Naive thymus-derived CD4-positive, alpha-beta T cell (primary cell): ENCODE measurements at regions of chr7 and their contacts with region 1.

Region 1: DNA sequence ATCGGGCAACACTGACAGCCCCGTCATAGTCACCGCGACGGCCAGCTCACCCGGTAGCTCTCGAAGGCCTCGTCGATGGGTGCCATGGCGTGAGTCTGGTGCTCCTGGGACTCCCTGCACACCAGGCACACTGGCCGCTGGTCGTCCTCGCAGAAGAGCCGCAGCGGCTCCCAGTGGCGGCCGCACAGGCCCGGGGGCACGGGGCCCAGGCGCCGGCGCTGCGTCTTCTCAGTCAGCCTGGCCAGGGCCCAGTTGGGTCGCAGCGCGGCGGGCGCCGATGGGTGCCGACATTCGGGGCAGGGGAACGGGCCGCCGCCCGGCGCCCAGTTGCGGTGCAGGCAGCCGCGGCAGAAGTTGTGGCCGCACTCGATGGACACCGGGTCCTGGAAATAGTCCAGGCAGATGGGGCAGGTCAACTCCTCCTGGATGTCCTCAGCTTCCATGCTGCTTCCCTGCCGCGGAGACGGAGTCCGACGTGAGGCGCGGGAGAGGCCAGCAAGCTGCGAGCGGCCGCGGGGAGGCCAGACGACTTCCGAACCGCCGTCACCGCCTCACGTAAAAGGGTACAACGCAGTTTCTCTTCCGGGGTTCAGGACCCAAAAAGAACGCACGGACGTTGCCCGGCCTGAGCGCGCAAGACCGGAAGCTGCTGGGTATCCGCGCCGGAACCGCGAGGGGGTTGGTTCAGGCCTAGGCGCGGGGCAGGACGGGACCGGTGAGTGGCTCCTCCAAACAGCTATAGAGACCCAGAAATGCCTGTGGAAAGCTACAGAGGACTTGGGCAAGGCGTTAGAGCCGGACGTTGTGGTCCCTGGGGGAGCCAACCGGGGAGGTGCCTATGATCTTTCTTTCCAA is at the start of gene TRIM4:
- DNase-seq: peak; percentile 76 to 92 (median 89)
- ATAC-seq: peak; percentile 98
- H3K4me3 ChIP-seq: peak within 1 kb of the TSS; percentile 68
- H3K4me3 Mint-ChIP-seq: peak within 1 kb of the TSS; percentile 87 to 98 (median 96)
- H3K27ac ChIP-seq: peak within 1 kb of the TSS; percentile 96
- H3K27ac Mint-ChIP-seq: peak within 1 kb of the TSS; percentile 96 to 99 (median 98)
- H3K4me1 ChIP-seq: peaks cover 36 to 37% of the 10 kb centered on the region in 2 donors
- H3K4me1 Mint-ChIP-seq: peaks cover 28 to 65% (median 54%) of the 10 kb centered on the region in 7 donors
- H3K27me3 ChIP-seq: no peaks in the 10 kb centered on the region
- H3K27me3 Mint-ChIP-seq: peaks cover 0 to 2% (median 0%) of the 10 kb centered on the region in 5 donors
- total RNA-seq, gene TRIM4: 30.1 to 75.0 (median 37.6) TPM

Region 2: GRCh38 chr7:99398625-99399445 is 520.4 kb before region 1 on chr7:
- CTCF ChIA-PET with region 1: no interaction called
- POLR2A ChIA-PET with region 1: no interaction called
- intact Hi-C with region 1: no loop called
- DNase-seq: no peak
- ATAC-seq: no peak
- H3K4me3 ChIP-seq: no peak overlapping the region
- H3K4me3 Mint-ChIP-seq: no peak overlapping the region
- H3K27ac ChIP-seq: peak overlapping the region; percentile 6
- H3K27ac Mint-ChIP-seq: peak overlapping the region in 8 of 9 donors; percentile 67 to 81 (median 74)
- H3K4me1 ChIP-seq: peaks cover 0 to 3% of the 10 kb centered on the region in 2 donors
- H3K4me1 Mint-ChIP-seq: peaks cover 9 to 27% (median 21%) of the 10 kb centered on the region in 7 donors
- H3K27me3 ChIP-seq: no peaks in the 10 kb centered on the region
- H3K27me3 Mint-ChIP-seq: no peaks in the 10 kb centered on the region

Region 3: GRCh38 chr7:99990460-99990852 is 71.3 kb after region 1 on chr7:
- CTCF ChIA-PET with region 1: interaction called, 102 read pairs
- POLR2A ChIA-PET with region 1: interaction called, 26 read pairs
- intact Hi-C with region 1: no loop called
- DNase-seq: no peak
- ATAC-seq: no peak
- H3K4me3 ChIP-seq: no peak overlapping the region
- H3K4me3 Mint-ChIP-seq: peak overlapping the region in 2 of 10 donors; percentile 28 to 53
- H3K27ac ChIP-seq: no peak overlapping the region
- H3K27ac Mint-ChIP-seq: no peak overlapping the region
- H3K4me1 ChIP-seq: no peaks in the 10 kb centered on the region
- H3K4me1 Mint-ChIP-seq: peaks cover 0 to 12% (median 5%) of the 10 kb centered on the region in 7 donors
- H3K27me3 ChIP-seq: no peaks in the 10 kb centered on the region
- H3K27me3 Mint-ChIP-seq: peaks cover 0 to 22% (median 0%) of the 10 kb centered on the region in 5 donors

Region 4: GRCh38 chr7:100015232-100016209 is 96.3 kb after region 1 on chr7 and contains the start of gene ZKSCAN1:
- CTCF ChIA-PET with region 1: interaction called, 3 read pairs
- POLR2A ChIA-PET with region 1: interaction called, 9 read pairs
- intact Hi-C with region 1: loop called (anchors 1 kb)
- DNase-seq: peak; percentile 68 to 86 (median 81)
- ATAC-seq: peak; percentile 99
- H3K4me3 ChIP-seq: peak within 1 kb of the TSS; percentile 51
- H3K4me3 Mint-ChIP-seq: peak within 1 kb of the TSS; percentile 92 to 98 (median 96)
- H3K27ac ChIP-seq: peak within 1 kb of the TSS; percentile 98
- H3K27ac Mint-ChIP-seq: peak within 1 kb of the TSS; percentile 91 to 98 (median 97)
- H3K4me1 ChIP-seq: peaks cover 19 to 22% of the 10 kb centered on the region in 2 donors
- H3K4me1 Mint-ChIP-seq: peaks cover 23 to 57% (median 44%) of the 10 kb centered on the region in 7 donors
- H3K27me3 ChIP-seq: no peaks in the 10 kb centered on the region
- H3K27me3 Mint-ChIP-seq: peaks cover 0 to 3% (median 0%) of the 10 kb centered on the region in 5 donors
- total RNA-seq, gene ZKSCAN1: 54.0 to 103 (median 70.1) TPM

Region 5: DNA sequence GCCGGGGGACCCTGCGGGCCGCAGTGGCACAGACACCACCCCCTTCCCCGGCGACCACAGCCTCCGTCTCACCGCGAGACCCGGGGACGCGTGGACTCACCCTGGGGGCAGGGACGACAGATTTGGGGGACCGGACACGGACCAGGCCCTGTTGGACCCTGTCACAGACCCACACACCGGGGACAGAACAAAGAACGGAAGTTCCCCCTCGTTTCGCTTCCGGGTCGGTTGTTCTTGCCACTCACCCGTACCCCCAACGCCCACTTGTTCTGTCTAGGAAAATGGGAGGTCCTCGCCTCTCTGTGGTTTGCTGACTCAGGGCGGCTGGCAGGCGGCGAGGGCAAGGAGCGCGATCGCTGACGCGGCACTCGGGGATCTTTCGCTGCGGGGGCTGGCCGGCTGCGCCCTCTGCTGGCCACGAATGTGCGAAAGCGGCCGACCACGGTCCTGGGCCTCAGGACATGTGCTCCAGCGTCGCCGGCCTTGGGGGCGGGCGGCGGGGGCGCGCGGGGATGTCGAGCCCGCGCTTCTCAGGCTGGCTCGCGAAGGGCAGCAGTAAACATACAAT is 162.4 kb after region 1 on chr7 and contains the start of gene ZNF3:
- CTCF ChIA-PET with region 1: interaction called, 5 read pairs
- POLR2A ChIA-PET with region 1: interaction called, 5 read pairs
- intact Hi-C with region 1: loop called (anchors 1 kb)
- DNase-seq: peak; percentile 87 to 98 (median 97)
- ATAC-seq: peak; percentile 94
- H3K4me3 ChIP-seq: peak within 1 kb of the TSS; percentile 78
- H3K4me3 Mint-ChIP-seq: peak within 1 kb of the TSS; percentile 89 to 96 (median 92)
- H3K27ac ChIP-seq: peak within 1 kb of the TSS; percentile 82
- H3K27ac Mint-ChIP-seq: peak within 1 kb of the TSS; percentile 64 to 98 (median 91)
- H3K4me1 ChIP-seq: peaks cover 5 to 18% of the 10 kb centered on the region in 2 donors
- H3K4me1 Mint-ChIP-seq: peaks cover 26 to 46% (median 41%) of the 10 kb centered on the region in 7 donors
- H3K27me3 ChIP-seq: no peaks in the 10 kb centered on the region
- H3K27me3 Mint-ChIP-seq: peaks cover 0 to 19% (median 0%) of the 10 kb centered on the region in 5 donors
- total RNA-seq, gene ZNF3: 29.1 to 48.0 (median 35.0) TPM

Region 6: DNA sequence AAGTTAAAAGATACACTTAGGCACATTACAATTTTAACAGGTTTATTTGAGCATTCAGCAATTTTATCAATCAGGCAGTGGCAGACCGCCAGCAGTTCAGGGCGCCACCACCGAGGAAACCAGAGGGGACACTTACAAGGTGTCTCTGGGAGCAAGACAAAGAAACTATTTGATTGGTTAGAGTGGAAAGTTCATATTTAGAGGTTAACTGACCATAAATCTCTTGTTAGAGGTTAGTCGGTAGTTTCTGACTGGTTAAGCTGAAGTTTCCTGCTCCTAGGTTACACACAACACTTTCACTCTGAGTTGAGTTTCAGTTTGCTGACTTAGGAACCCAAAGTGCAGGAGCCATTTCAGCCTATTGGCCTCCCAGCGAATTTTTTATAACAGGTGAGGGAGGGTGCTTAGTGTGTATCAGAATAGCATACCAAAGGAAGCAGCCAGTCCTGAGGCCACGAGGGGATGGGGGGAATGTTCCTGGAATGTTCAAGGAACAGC is 289.8 kb after region 1 on chr7:
- CTCF ChIA-PET with region 1: no interaction called
- POLR2A ChIA-PET with region 1: no interaction called
- intact Hi-C with region 1: loop called (anchors 5 to 10 kb)
- DNase-seq: peak in 6 of 9 donors; percentile 29 to 38 (median 34)
- ATAC-seq: peak; percentile 54
- H3K4me3 ChIP-seq: peak overlapping the region; percentile 45
- H3K4me3 Mint-ChIP-seq: peak overlapping the region; percentile 46 to 77 (median 74)
- H3K27ac ChIP-seq: peak overlapping the region; percentile 49
- H3K27ac Mint-ChIP-seq: peak overlapping the region; percentile 66 to 98 (median 87)
- H3K4me1 ChIP-seq: peaks cover 44 to 45% of the 10 kb centered on the region in 2 donors
- H3K4me1 Mint-ChIP-seq: peaks cover 39 to 56% (median 54%) of the 10 kb centered on the region in 7 donors
- H3K27me3 ChIP-seq: no peaks in the 10 kb centered on the region
- H3K27me3 Mint-ChIP-seq: no peaks in the 10 kb centered on the region

Region 7: GRCh38 chr7:101251871-101252659 is 1332.9 kb after region 1 on chr7:
- CTCF ChIA-PET with region 1: no interaction called
- POLR2A ChIA-PET with region 1: no interaction called
- intact Hi-C with region 1: loop called in 1 of 2 experiments (anchors 5 kb)
- DNase-seq: peak; percentile 95 to 98 (median 97)
- ATAC-seq: peak; percentile 100
- H3K4me3 ChIP-seq: peak overlapping the region; percentile 76
- H3K4me3 Mint-ChIP-seq: peak overlapping the region; percentile 94 to 100 (median 99)
- H3K27ac ChIP-seq: peak overlapping the region; percentile 87
- H3K27ac Mint-ChIP-seq: peak overlapping the region; percentile 90 to 99 (median 97)
- H3K4me1 ChIP-seq: peaks cover 13 to 16% of the 10 kb centered on the region in 2 donors
- H3K4me1 Mint-ChIP-seq: peaks cover 28 to 39% (median 32%) of the 10 kb centered on the region in 7 donors
- H3K27me3 ChIP-seq: no peaks in the 10 kb centered on the region
- H3K27me3 Mint-ChIP-seq: peaks cover 0 to 4% (median 0%) of the 10 kb centered on the region in 5 donors